Dendritic cell treated with granulocyte-macrophage colony-stimulating factor and Interleukin-4, amounts not matched to agents 40 ng/mL and 50 ng/mL, for 4 days (primary cell): ENCODE measurements at regions of chr15 and their contacts with region 1.

Region 1: GRCh38 chr15:58980351-58980939 is 7.0 kb upstream of the RNF111 start:
- H3K4me3 Mint-ChIP-seq: no peak overlapping the region
- H3K27ac Mint-ChIP-seq: no peak overlapping the region
- H3K4me1 Mint-ChIP-seq: peaks cover 68% of the 10 kb centered on the region
- H3K27me3 Mint-ChIP-seq: no peaks in the 10 kb centered on the region

Region 2: DNA sequence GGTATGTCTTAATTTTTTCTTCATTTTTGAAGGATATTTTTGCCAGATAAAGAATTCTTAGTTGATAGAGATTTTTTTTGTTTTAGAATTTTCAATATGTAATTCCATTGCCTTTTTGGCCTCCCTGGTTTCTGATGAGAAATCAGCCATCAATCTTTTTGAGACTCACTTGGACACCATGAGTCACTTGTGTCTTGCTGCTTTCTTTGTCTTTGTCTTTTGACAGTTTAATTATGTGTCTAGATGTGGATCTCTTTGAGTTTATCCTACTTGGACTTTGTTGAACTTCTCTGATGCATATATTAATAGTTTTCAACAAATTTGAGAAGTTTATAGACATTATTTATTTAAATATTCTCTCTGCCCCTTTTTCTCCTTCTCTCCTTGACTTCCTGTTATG is 877.0 kb before region 1 on chr15:
- intact Hi-C with region 1: no loop called
- H3K4me3 Mint-ChIP-seq: no peak overlapping the region
- H3K27ac Mint-ChIP-seq: no peak overlapping the region
- H3K4me1 Mint-ChIP-seq: no peaks in the 10 kb centered on the region
- H3K27me3 Mint-ChIP-seq: peaks cover 23% of the 10 kb centered on the region

Region 3: DNA sequence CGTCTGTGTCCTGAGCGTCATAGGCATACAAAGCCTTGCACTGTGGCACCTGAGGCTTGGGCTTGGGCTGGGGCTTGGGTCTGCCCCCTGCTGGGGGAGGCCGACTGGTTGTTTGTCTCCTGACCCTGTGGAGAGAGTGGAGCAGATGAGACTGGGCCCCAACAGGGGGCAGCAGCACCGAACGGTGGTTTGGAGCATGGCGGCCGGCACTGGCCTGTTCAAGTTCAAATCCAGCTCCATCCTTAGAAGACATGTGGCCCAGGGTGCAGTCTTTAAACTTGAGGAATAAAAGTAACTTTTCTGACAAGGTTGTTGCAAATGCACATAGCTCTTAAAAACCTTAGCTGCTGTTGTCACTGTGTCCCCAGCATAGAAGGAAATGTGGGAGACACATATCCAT is 157.8 kb after region 1 on chr15:
- intact Hi-C with region 1: loop called (anchors 2 kb)
- H3K4me3 Mint-ChIP-seq: no peak overlapping the region
- H3K27ac Mint-ChIP-seq: peak overlapping the region; percentile 20
- H3K4me1 Mint-ChIP-seq: peaks cover 40% of the 10 kb centered on the region
- H3K27me3 Mint-ChIP-seq: no peaks in the 10 kb centered on the region